ENCODE measurements at regions of chr7 and their contacts with region 1.

Region 1: GRCh38 chr7:116249708-116250553 is 39.6 kb downstream of the TES start:
- DNase-seq: peak; percentile 37
- H3K4me3 ChIP-seq: no peak overlapping the region
- H3K27ac ChIP-seq: no peak overlapping the region
- H3K4me1 ChIP-seq: no peaks in the 10 kb centered on the region
- H3K27me3 ChIP-seq: no peaks in the 10 kb centered on the region
- CTCF ChIP-seq: peak; percentile 60 to 66

Region 2: DNA sequence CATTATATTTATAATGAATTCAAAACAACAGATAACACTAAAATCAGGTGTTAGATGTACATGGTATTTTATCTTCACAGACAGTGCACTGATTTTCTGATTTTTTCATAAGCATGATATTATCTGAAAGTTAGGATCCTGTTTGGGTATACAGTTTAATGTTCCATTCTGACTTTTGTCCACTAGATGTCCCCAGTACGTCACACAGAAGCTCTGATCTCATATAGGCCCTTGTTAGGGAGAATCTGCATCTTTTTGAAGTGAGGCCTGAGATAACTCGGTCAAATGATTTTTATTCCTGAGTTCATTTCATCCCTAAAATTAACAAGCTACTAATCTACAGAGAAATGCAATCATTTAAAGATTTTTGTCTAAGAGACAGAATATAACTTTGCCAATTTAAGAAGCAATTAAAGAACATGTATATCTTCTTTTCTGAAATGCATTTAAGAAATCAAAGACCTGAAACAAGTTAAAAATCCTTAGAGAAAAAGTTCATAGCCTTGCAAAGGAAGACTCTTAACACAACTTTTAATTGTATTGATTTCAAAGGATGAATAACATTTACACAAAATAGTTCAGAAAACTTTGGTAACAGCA is 111.6 kb before region 1 on chr7:
- CTCF ChIA-PET with region 1: interaction called, 4 read pairs
- dilution Hi-C with region 1: no loop called
- in situ Hi-C with region 1: no loop called
- intact Hi-C with region 1: loop called (anchors 2 kb)
- DNase-seq: peak; percentile 69
- H3K4me3 ChIP-seq: no peak overlapping the region
- H3K27ac ChIP-seq: peak overlapping the region; percentile 61
- H3K4me1 ChIP-seq: peaks cover 21% of the 10 kb centered on the region
- H3K27me3 ChIP-seq: no peaks in the 10 kb centered on the region
- CTCF ChIP-seq: peak; percentile 82 to 85

Region 3: GRCh38 chr7:116165717-116166116 is 84.2 kb before region 1 on chr7:
- CTCF ChIA-PET with region 1: no interaction called
- dilution Hi-C with region 1: loop called (anchors 5 kb)
- in situ Hi-C with region 1: no loop called
- intact Hi-C with region 1: no loop called
- DNase-seq: no peak
- H3K4me3 ChIP-seq: no peak overlapping the region
- H3K27ac ChIP-seq: no peak overlapping the region
- H3K4me1 ChIP-seq: no peaks in the 10 kb centered on the region
- H3K27me3 ChIP-seq: no peaks in the 10 kb centered on the region
- CTCF ChIP-seq: no peak

Region 4: DNA sequence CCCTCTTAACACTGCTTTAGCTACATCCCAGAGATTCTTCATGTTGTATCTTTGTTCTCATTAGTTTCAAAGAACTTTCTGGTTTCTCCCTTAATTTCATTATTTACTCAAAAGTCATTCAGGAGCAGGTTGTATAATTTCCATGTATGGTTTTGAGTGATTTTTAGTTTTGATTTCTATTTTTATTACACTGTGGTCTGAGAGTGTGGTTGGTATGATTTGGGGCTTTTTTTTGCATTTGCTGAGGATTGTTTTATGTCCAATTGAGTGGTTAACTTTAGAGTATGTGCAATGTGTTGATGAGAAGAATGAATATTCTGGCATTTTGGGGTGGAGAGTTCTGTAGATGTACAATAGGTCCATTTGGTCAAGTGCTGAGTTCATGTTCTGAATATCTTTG is 574.5 kb after region 1 on chr7:
- CTCF ChIA-PET with region 1: no interaction called
- dilution Hi-C with region 1: no loop called
- in situ Hi-C with region 1: no loop called
- intact Hi-C with region 1: no loop called
- DNase-seq: no peak
- H3K4me3 ChIP-seq: no peak overlapping the region
- H3K27ac ChIP-seq: no peak overlapping the region
- H3K4me1 ChIP-seq: no peaks in the 10 kb centered on the region
- H3K27me3 ChIP-seq: no peaks in the 10 kb centered on the region
- CTCF ChIP-seq: no peak

Measured in mammary epithelial cell (primary cell).